B cell (primary cell): ENCODE measurements at regions of chr15 and their contacts with region 1.

Region 1: GRCh38 chr15:76057332-76058000 is 2.3 kb upstream of the TMEM266 start:
- DNase-seq: peak; percentile 73
- ATAC-seq: peak; percentile 37
- H3K4me3 ChIP-seq: peak overlapping the region in 4 of 5 experiments; percentile 7 to 37 (median 17)
- H3K4me3 Mint-ChIP-seq: peak overlapping the region; percentile 51
- H3K27ac ChIP-seq: peak overlapping the region; percentile 54 to 83
- H3K27ac Mint-ChIP-seq: peak overlapping the region; percentile 69
- H3K4me1 ChIP-seq: peaks cover 33 to 35% of the 10 kb centered on the region in 2 donors
- H3K4me1 Mint-ChIP-seq: peaks cover 36% of the 10 kb centered on the region
- H3K27me3 ChIP-seq: peaks cover 0 to 31% (median 19%) of the 10 kb centered on the region in 4 experiments
- H3K27me3 Mint-ChIP-seq: peaks cover 26% of the 10 kb centered on the region
- CTCF ChIP-seq: peak; percentile 80

Region 2: DNA sequence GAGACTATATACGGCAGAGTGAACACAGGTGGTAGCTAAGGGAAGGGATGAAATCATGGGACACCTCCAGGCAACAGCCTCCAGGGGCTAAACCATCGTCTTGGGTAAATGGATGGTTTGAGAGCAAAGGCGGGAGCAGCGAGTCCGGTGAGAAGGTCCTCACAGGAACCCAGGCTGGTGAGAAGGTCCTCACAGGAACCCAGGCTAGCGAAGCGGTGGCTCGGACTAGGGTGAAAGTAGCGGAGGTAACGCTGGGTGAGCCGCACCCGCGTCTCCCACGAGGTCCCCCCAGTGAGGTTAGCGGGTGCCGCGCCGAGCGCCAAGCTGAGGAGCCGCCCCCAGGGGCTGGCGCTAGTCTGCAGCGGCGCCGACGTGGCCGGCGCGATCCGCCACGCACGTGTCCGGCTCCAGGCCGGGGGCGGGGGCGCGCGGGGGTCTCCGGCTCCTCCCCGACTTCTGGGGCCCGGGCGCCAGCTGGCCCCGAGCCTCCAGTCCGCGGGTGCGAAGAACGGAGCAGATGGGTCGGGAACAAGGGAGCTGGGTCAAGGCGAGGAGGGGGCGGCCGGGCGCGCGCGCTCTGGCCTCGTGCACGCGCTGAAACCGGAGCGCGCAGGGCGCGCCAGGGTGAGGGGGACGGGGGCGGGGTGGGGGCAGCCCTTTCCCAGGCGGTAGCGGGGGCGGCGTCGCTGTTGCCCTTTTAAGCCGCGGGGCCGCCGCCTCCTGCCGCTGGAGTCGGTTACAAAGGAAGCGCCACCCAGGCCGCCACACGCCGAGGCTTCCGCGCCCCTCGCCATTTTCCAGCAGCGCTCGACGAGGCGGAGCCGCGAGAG is 214.5 kb before region 1 on chr15 and contains the start of gene UBE2Q2:
- CTCF ChIA-PET with region 1: no interaction called
- POLR2A ChIA-PET with region 1: no interaction called
- intact Hi-C with region 1: loop called (anchors 5 kb)
- DNase-seq: peak; percentile 83
- ATAC-seq: peak; percentile 63
- H3K4me3 ChIP-seq: peak within 1 kb of the TSS; percentile 66 to 86 (median 83)
- H3K4me3 Mint-ChIP-seq: peak within 1 kb of the TSS; percentile 94
- H3K27ac ChIP-seq: peak within 1 kb of the TSS; percentile 65 to 68
- H3K27ac Mint-ChIP-seq: peak within 1 kb of the TSS; percentile 95
- H3K4me1 ChIP-seq: peaks cover 18 to 21% of the 10 kb centered on the region in 2 donors
- H3K4me1 Mint-ChIP-seq: peaks cover 36% of the 10 kb centered on the region
- H3K27me3 ChIP-seq: no peaks in the 10 kb centered on the region
- H3K27me3 Mint-ChIP-seq: no peaks in the 10 kb centered on the region
- CTCF ChIP-seq: no peak
- total RNA-seq, gene UBE2Q2: 31.2 and 33.6 TPM in 2 replicates

Region 3: GRCh38 chr15:76150971-76151598 is 93.6 kb after region 1 on chr15:
- CTCF ChIA-PET with region 1: interaction called, 3 read pairs
- POLR2A ChIA-PET with region 1: no interaction called
- intact Hi-C with region 1: loop called (anchors 5 kb)
- DNase-seq: peak; percentile 84
- ATAC-seq: peak; percentile 96
- H3K4me3 ChIP-seq: no peak overlapping the region
- H3K4me3 Mint-ChIP-seq: no peak overlapping the region
- H3K27ac ChIP-seq: no peak overlapping the region
- H3K27ac Mint-ChIP-seq: peak overlapping the region; percentile 26
- H3K4me1 ChIP-seq: peaks cover 11 to 16% of the 10 kb centered on the region in 2 donors
- H3K4me1 Mint-ChIP-seq: peaks cover 14% of the 10 kb centered on the region
- H3K27me3 ChIP-seq: peaks cover 0 to 9% (median 4%) of the 10 kb centered on the region in 4 experiments
- H3K27me3 Mint-ChIP-seq: peaks cover 8% of the 10 kb centered on the region
- CTCF ChIP-seq: peak; percentile 95